Tibial artery (tissue), 4 donors: ENCODE measurements at regions of chr3 and their contacts with region 1.

Region 1: DNA sequence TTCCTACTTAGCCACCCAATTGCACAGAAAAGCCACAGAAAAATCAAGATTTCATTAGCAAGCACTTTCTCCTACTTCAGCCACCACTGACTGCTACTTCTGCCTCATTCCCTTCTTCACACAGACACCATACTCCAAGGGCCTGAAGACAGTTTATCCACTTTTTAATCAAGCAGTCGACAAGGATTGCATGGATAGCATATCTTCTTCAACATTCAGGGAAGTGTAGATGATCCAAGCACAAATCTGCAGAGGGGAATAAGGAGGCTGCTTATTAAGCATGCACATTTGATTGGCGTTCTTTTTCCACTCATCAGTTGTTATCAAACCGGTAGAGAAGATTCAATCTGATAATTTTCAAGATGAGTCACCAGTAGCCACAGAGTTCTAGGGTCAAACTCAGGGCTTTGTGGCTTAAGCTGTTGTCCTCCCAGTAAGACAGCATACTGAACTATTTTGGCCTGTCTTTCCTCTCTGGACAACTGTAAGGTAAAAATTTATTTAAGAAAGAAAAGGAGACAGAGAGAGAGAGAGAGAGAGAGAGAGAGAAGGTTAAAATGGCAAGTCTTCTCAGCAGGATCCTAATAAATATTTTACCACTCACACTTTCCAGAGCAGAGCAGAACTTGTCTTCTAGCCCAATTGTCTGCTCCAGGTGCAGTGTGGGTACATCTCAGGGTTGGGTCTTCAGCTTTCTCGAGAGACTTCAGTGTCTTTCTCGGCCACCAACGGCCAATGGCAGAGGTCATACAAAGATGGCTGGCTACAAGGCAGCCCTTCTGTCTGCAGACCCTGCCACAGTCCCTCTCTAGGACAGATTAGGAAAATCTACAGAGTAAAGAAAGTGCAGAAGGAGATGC is 80.6 kb upstream of the BHLHE40 start:
- DNase-seq: no peak
- H3K4me3 ChIP-seq: peak overlapping the region in 1 of 2 donors; percentile 37
- H3K27ac ChIP-seq: peak overlapping the region; percentile 66 to 89
- H3K4me1 ChIP-seq: peaks cover 0 to 34% (median 24%) of the 10 kb centered on the region in 4 donors
- H3K27me3 ChIP-seq: no peaks in the 10 kb centered on the region
- CTCF ChIP-seq: no peak

Region 2: DNA sequence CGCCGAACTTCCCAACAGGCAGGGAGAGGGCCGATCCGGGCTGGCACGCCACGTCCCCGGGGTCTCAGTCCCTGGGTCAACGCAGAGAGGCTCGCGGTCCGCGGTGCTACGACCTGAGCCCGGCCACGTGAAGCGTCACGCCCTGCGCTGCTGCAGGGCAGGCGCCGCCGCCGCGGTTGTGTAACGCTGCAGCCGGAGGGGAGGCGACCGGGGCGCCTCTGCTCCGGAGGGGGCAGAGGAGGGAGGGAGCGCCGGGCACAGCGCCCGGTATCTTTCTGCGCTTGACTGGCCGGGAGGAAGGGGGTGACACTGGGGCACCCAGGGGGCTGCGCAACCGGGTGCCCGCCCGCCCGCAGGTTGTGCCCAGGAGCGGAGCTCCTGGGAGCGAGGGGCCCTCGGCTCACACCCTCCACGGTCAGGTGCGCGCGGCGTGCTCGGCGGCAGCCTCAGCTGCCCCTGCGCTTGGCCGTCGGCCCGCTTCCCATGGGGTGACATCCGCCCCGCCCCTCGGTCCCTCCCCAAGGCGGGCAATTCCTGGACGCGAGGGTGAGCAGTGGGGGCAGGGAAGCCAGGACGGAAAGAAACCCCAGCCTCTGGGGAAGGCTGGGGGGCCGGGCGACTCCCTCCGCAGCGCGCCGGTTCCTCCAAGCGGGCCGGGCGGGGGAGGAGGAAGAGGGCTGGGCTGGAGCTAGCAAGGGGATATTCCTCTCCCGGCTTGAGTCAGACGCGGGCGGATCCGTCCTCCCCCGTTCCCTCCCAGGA is 79.7 kb after region 1 on chr3:
- intact Hi-C with region 1: loop called (anchors 10 kb)
- DNase-seq: peak; percentile 97 to 99
- H3K4me3 ChIP-seq: peak overlapping the region; percentile 60 to 85
- H3K27ac ChIP-seq: peak overlapping the region; percentile 95 to 99
- H3K4me1 ChIP-seq: peaks cover 0 to 45% (median 33%) of the 10 kb centered on the region in 4 donors
- H3K27me3 ChIP-seq: no peaks in the 10 kb centered on the region
- CTCF ChIP-seq: no peak

Region 3: DNA sequence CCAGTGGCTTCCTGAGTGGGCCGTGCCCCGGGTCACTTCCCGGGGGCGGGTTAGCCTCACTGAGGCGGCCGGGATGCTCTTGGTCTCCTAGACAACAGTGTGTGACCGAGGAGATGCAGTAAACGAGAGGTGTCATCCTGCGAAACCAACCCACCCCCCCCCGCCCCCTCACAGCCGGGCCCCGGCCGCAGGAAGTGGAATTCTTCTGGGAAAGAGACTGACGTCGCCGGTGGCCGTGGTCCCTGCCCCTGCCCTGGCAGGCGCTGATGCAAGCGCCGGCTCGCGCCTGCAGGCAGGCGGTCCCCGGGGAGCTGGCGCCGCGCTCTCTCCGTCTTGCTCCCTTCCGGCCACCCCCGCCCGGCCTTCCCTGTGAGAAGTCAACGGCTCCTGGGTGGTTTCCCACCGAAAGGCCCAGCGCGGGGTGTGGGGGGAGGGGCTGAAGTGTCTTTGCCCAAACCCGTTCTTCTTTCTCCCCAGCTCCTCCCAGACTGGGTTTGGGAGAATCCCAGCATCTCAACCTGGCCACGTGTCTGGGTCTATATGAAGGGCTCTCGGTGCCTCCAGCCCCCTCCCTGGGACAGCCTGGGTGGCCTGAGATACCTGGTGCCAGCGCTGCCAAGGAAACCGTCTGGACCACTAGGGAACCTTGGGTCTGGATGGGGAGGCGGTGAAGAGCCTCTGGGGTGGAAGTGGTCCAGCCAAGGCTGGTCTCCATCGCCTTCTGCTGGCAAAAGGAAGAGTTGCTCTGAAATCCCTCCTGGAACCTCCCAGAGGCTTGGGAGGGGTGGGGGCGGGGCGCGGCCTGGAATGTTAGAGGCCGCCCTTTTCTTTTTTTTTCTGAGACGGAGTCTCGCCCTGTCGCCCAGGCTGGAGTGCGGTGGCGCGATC is 127.9 kb after region 1 on chr3:
- intact Hi-C with region 1: no loop called
- DNase-seq: peak; percentile 85 to 98
- H3K4me3 ChIP-seq: peak overlapping the region; percentile 50 to 57
- H3K27ac ChIP-seq: peak overlapping the region; percentile 79 to 85
- H3K4me1 ChIP-seq: peaks cover 0 to 19% (median 7%) of the 10 kb centered on the region in 4 donors
- H3K27me3 ChIP-seq: no peaks in the 10 kb centered on the region
- CTCF ChIP-seq: peak; percentile 75 to 83